ENCODE measurements at regions of chr17 and their contacts with region 1.

Region 1: DNA sequence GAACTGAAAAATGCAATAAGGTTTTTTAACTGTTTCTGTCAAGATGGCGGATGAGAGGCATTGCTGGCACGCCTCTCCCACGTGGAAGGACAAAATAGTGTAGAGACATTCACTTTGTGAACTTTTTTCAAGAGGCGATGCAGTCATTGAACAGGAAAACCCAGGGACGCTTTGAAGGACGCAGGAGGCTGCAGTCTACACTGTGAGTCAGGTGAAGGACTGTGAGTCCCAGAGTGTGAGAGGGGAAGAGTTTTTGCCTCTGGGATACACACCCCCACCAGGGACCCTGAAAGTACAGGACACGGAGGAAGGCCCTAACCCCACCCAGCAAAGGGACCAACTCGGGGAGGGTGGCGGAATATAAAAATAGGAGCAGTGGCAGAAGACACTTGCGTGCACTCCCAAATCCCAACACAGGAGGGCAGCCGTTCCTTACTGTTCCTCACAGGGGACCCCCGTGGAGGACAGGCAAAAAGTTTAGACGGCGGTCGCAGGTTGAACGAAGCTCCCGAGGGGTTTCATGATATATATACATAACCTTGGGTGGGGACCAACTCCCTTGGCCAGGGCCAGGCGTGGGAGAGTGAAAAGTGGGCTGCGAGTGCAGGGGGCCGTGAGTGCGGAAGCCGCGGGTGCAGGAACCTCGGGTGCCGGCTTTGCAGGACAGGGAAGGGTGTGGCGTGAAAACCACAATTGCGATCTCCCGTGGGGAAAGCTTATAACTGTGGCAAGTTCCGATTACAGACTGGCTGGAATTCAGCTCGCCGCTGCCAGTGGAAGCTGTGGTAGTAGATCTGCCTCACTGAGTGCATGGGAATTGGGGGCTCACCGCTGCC is 82.0 kb upstream of the ALOX12 start:
- DNase-seq: peak; percentile 51 to 79 (median 61)
- ATAC-seq: peak; percentile 93
- H3K4me3 ChIP-seq: peak overlapping the region in 1 of 2 donors; percentile 7
- H3K27ac ChIP-seq: no peak overlapping the region
- H3K4me1 ChIP-seq: peaks cover 2 to 11% of the 10 kb centered on the region in 2 donors
- H3K27me3 ChIP-seq: peaks cover 0 to 5% of the 10 kb centered on the region in 2 donors
- CTCF ChIP-seq: peak; percentile 80 to 83

Region 2: GRCh38 chr17:6853764-6854442 is 59.9 kb before region 1 on chr17:
- intact Hi-C with region 1: no loop called
- DNase-seq: no peak
- ATAC-seq: peak; percentile 75
- H3K4me3 ChIP-seq: peak overlapping the region; percentile 4 to 24
- H3K27ac ChIP-seq: no peak overlapping the region
- H3K4me1 ChIP-seq: peaks cover 0 to 3% of the 10 kb centered on the region in 2 donors
- H3K27me3 ChIP-seq: peaks cover 0 to 11% of the 10 kb centered on the region in 2 donors
- CTCF ChIP-seq: no peak

Region 3: DNA sequence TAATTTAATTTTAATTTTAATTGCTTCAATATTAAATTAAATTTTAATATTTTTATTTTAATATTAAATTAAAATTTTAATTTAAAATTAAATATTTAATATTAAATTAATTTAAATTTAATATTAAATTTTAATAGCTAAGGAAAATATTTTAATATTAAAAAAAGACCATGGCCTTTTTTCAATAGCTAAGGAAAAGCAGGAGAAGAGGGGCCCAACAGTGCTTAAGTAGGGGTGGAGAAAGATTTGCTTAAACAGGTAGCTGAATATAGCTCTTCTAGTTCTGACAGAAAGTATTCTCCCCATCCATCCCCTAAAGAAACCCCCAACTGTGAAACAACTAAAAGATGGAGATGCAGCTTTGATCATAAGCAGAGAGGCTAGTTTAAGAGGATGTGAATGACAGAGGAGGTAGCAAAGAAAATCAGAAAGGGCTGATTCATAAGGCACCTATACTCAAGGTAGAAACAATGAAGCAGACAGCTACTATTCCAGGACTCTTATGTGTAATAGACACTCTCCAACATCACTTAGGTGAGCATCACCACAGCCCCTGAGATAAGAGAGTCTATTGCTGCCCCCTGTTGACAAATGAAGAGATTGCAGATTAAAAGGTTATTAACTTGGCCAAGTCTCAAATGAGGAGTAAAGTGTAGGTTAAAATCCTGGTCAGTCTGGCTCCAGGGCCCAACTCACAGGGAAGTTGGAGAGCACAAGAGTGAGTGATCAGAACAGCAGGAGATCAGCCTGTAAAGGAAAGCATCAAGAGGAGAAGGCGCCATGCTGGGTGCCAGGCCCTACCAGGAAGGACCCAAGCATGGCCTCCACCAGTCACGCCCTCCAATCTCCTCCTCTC is 90.8 kb after region 1 on chr17:
- intact Hi-C with region 1: loop called (anchors 5 kb)
- DNase-seq: peak in 2 of 4 donors; percentile 69
- ATAC-seq: peak; percentile 90
- H3K4me3 ChIP-seq: no peak overlapping the region
- H3K27ac ChIP-seq: no peak overlapping the region
- H3K4me1 ChIP-seq: peaks cover 0 to 15% of the 10 kb centered on the region in 2 donors
- H3K27me3 ChIP-seq: no peaks in the 10 kb centered on the region
- CTCF ChIP-seq: peak; percentile 63 to 68

Region 4: GRCh38 chr17:7014261-7014994 is 100.6 kb after region 1 on chr17:
- intact Hi-C with region 1: loop called in 1 of 2 experiments (anchors 5 kb)
- DNase-seq: peak; percentile 95 to 100 (median 98)
- ATAC-seq: peak; percentile 88
- H3K4me3 ChIP-seq: peak overlapping the region; percentile 82 to 97
- H3K27ac ChIP-seq: peak overlapping the region; percentile 98 to 99
- H3K4me1 ChIP-seq: peaks cover 13 to 76% of the 10 kb centered on the region in 2 donors
- H3K27me3 ChIP-seq: no peaks in the 10 kb centered on the region
- CTCF ChIP-seq: peak; percentile 70 to 89

Measured in left lung (tissue), 14 donors.